Heart left ventricle (tissue), 16 donors: ENCODE measurements at regions of chr5 and their contacts with region 1.

Region 1: DNA sequence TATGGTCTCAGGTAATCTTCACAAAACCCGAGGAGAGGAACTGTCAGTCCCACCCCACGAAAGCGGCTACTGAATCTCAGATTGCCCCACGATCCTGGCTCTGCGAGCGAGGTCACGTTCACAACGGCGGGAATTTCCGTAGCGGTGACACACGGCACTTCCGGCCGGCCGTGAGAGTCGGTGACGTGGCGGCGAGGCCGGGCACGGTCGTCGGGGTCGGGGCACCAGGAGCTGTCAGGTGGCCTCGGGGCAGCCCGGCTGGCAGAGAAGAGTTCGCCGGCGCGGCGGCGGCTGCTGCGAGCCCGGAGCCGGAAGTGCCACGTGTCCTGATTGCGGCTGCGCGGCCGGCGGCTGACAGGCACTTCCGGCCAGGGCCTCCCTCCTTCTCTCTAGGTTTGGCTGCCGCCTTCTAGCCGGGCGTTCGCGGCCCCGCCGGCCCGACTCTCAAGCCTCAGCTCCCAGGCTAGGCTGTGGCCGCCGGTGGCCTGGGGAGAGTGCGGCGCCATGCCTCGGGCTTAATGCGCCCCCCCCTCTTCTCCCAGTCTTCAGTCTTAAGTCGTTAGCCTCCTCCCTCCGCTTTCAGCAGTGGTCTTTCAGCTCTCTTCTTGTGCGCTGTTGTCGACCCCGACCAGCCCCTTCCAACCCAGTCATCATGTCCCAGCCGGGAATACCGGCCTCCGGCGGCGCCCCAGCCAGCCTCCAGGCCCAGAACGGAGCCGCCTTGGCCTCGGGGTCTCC is at the start of gene SEC24A:
- DNase-seq: peak; percentile 90 to 95 (median 93)
- ATAC-seq: peak; percentile 79 to 96 (median 96)
- H3K4me3 ChIP-seq: peak within 1 kb of the TSS; percentile 77 to 99 (median 90)
- H3K27ac ChIP-seq: peak within 1 kb of the TSS; percentile 89 to 99 (median 94)
- H3K4me1 ChIP-seq: peaks cover 0 to 53% (median 27%) of the 10 kb centered on the region in 12 donors
- H3K27me3 ChIP-seq: no peaks in the 10 kb centered on the region
- CTCF ChIP-seq: no peak
- POLR2A ChIP-seq: peak in 1 of 2 donors; percentile 84
- total RNA-seq, gene SEC24A: 6.7 to 15.7 (median 8.6) TPM

Region 2: GRCh38 chr5:134637161-134637582 is 11.4 kb before region 1 on chr5:
- intact Hi-C with region 1: loop called in 2 of 10 experiments (anchors 1 kb)
- DNase-seq: no peak
- ATAC-seq: no peak
- H3K4me3 ChIP-seq: no peak overlapping the region
- H3K27ac ChIP-seq: no peak overlapping the region
- H3K4me1 ChIP-seq: peaks cover 0 to 6% (median 0%) of the 10 kb centered on the region in 12 donors
- H3K27me3 ChIP-seq: no peaks in the 10 kb centered on the region
- CTCF ChIP-seq: no peak
- POLR2A ChIP-seq: no peak